Right ventricle myocardium inferior (tissue), 1 donor: ENCODE measurements at regions of chr22 and their contacts with region 1.

Region 1: DNA sequence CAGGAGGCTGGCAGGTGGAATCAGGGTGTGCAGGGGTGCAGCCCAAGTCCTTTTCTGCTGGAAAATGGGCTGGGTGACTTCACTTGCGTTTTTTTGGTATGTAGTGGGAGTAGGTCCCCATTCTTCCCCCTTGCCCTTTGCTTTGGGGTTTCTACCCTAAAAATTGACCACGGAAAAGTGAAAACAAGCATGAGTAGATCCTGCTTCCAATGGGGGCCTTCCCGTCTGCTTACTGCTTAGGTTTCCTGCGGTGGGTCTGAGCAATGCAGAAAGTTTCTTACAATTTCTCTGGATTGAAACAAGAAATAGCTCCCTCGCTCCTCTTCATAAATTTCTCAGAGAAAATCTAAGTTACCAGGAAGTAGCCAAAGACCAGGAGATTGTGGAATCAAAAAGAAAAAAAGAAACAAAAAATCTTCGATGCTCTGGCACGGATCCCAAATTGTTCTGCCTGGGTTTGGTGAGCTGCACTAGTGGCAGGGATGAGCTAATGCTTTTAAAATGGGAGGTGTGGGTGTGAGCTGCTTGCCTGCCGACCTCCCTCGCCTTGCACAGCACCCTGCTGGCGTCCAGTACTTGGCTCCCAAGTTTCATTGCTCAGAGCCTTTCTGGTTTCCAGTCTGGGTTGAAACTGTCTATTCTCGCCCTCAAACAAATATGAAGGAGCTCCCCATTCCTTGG is 2.4 kb downstream of the TIMP3 start:
- DNase-seq: no peak
- ATAC-seq: no peak

Region 2: GRCh38 chr22:32827049-32827602 is 23.2 kb after region 1 on chr22:
- intact Hi-C with region 1: loop called (anchors 2 kb)
- DNase-seq: no peak
- ATAC-seq: peak; percentile 56